CD8-positive, alpha-beta T cell (primary cell): ENCODE measurements at regions of chr11 and their contacts with region 1.

Region 1: DNA sequence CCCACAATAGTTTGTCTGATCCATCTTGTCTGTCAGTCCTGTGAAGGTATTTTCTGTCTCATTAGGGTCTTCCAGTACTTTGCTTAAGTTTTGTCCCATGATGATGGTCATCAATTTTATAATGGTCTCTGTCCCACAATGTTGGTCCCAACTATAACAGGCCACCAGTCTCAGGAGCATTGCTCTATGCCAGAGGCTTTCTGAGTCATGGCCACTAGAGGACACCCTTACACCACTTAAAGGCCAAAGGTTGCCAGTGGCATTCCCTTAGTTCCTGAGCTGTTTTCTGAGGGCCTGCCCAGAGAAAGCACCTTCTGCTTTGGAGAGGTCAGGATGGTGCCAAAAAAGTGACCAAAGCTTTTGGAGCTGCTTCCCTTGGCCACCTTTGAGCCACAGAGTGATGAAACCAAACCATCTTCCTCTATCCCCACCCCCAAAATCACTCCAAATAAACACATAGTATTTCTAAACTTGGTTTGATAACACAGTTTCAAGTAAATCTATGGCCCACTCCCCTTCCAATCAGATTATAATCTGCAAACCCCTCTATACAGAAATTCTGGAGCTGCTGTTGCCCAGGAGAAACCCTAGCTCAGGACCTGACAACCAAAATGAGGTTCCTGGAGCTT is 19.3 kb downstream of the EIF3F start:
- DNase-seq: peak in 8 of 9 experiments; percentile 14 to 68 (median 44)
- ATAC-seq: peak; percentile 49
- H3K4me3 ChIP-seq: no peak overlapping the region
- H3K4me3 Mint-ChIP-seq: no peak overlapping the region
- H3K27ac ChIP-seq: no peak overlapping the region
- H3K27ac Mint-ChIP-seq: no peak overlapping the region
- H3K4me1 ChIP-seq: no peaks in the 10 kb centered on the region
- H3K4me1 Mint-ChIP-seq: no peaks in the 10 kb centered on the region
- H3K27me3 ChIP-seq: peaks cover 0 to 2% of the 10 kb centered on the region in 2 experiments
- H3K27me3 Mint-ChIP-seq: peaks cover 14% of the 10 kb centered on the region
- CTCF ChIP-seq: peak; percentile 49

Region 2: GRCh38 chr11:7924536-7924935 is 81.9 kb before region 1 on chr11:
- CTCF ChIA-PET with region 1: no interaction called
- POLR2A ChIA-PET with region 1: no interaction called
- intact Hi-C with region 1: no loop called
- DNase-seq: no peak
- ATAC-seq: no peak
- H3K4me3 ChIP-seq: no peak overlapping the region
- H3K4me3 Mint-ChIP-seq: no peak overlapping the region
- H3K27ac ChIP-seq: no peak overlapping the region
- H3K27ac Mint-ChIP-seq: no peak overlapping the region
- H3K4me1 ChIP-seq: no peaks in the 10 kb centered on the region
- H3K4me1 Mint-ChIP-seq: no peaks in the 10 kb centered on the region
- H3K27me3 ChIP-seq: no peaks in the 10 kb centered on the region
- H3K27me3 Mint-ChIP-seq: peaks cover 26% of the 10 kb centered on the region
- CTCF ChIP-seq: no peak

Region 3: GRCh38 chr11:8018484-8019313 is 12.2 kb after region 1 on chr11:
- CTCF ChIA-PET with region 1: interaction called, 19 read pairs
- POLR2A ChIA-PET with region 1: interaction called, 3 read pairs
- intact Hi-C with region 1: no loop called
- DNase-seq: peak; percentile 43 to 93 (median 69)
- ATAC-seq: peak; percentile 69
- H3K4me3 ChIP-seq: peak overlapping the region; percentile 54 to 68
- H3K4me3 Mint-ChIP-seq: peak overlapping the region; percentile 81
- H3K27ac ChIP-seq: peak overlapping the region; percentile 39 to 60
- H3K27ac Mint-ChIP-seq: peak overlapping the region; percentile 13
- H3K4me1 ChIP-seq: peaks cover 12% of the 10 kb centered on the region
- H3K4me1 Mint-ChIP-seq: peaks cover 13% of the 10 kb centered on the region
- H3K27me3 ChIP-seq: peaks cover 11 to 17% of the 10 kb centered on the region in 2 experiments
- H3K27me3 Mint-ChIP-seq: peaks cover 34% of the 10 kb centered on the region
- CTCF ChIP-seq: no peak

Region 4: DNA sequence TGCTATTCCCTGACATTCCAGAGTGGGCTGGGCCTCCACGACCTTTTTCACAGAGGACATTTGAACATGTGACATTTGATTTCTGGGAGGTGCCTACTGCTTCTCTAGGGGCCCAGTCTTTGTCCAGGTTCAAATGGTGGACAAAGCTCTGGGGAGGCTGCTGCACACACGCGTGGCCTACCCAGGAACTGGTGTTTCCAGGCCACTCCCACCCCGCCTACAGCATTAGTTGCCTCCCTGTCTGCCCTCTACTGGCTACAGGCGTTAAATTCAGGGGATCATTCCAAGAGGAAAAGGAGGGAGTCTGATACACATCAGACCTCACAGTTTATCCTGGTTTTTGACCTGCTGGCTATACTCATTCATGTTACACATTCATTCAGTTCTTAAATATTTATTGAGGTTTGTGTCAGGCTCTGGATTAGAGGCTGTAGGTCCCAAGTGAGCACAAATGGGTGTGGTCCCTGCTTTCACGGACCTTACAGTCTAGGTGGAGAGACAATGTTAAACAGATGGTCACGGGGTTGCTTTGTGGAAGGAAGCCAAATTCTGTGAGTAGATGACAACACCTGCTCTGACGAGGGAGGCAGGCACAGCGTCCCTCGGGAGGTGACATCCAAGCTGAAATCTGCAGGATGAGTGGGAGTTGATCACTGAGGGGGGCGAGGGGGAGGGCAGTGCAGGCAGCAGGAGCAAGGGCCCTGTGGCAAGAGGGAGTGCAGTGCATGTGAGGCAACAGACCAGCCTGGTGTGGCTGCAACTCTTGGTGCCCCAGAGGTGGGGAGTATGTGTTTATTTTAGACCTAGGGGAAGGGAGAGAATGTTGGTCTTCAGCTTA is 86.3 kb after region 1 on chr11:
- CTCF ChIA-PET with region 1: interaction called, 92 read pairs
- POLR2A ChIA-PET with region 1: no interaction called
- intact Hi-C with region 1: loop called in 1 of 2 experiments (anchors 1 kb)
- DNase-seq: peak in 1 of 9 experiments; percentile 38
- ATAC-seq: no peak
- H3K4me3 ChIP-seq: no peak overlapping the region
- H3K4me3 Mint-ChIP-seq: no peak overlapping the region
- H3K27ac ChIP-seq: no peak overlapping the region
- H3K27ac Mint-ChIP-seq: no peak overlapping the region
- H3K4me1 ChIP-seq: no peaks in the 10 kb centered on the region
- H3K4me1 Mint-ChIP-seq: no peaks in the 10 kb centered on the region
- H3K27me3 ChIP-seq: no peaks in the 10 kb centered on the region
- H3K27me3 Mint-ChIP-seq: no peaks in the 10 kb centered on the region
- CTCF ChIP-seq: no peak

Region 5: GRCh38 chr11:8263769-8264410 is 257.4 kb after region 1 on chr11 and contains the start of gene LMO1:
- CTCF ChIA-PET with region 1: no interaction called
- POLR2A ChIA-PET with region 1: no interaction called
- intact Hi-C with region 1: loop called in 1 of 2 experiments (anchors 10 kb)
- DNase-seq: peak; percentile 31 to 77 (median 68)
- ATAC-seq: peak; percentile 76
- H3K4me3 ChIP-seq: peak within 1 kb of the TSS in 1 of 2 experiments; percentile 55
- H3K4me3 Mint-ChIP-seq: peak within 1 kb of the TSS; percentile 63
- H3K27ac ChIP-seq: no peak within 1 kb of the TSS
- H3K27ac Mint-ChIP-seq: no peak within 1 kb of the TSS
- H3K4me1 ChIP-seq: peaks cover 11% of the 10 kb centered on the region
- H3K4me1 Mint-ChIP-seq: peaks cover 18% of the 10 kb centered on the region
- H3K27me3 ChIP-seq: peaks cover 0 to 13% of the 10 kb centered on the region in 2 experiments
- H3K27me3 Mint-ChIP-seq: peaks cover 58% of the 10 kb centered on the region
- CTCF ChIP-seq: peak; percentile 64
- total RNA-seq, gene LMO1: not detected